HepG2 (cell line): ENCODE measurements at regions of chr10 and their contacts with region 1.

Region 1: GRCh38 chr10:124476043-124476725 is 14.6 kb downstream of the LHPP start:
- DNase-seq: peak; percentile 80
- ATAC-seq: peak; percentile 65
- H3K4me3 ChIP-seq: peak overlapping the region; percentile 42 to 67 (median 54); a peak in 5 of 6 replicates
- H3K27ac ChIP-seq: peak overlapping the region; percentile 57
- H3K4me1 ChIP-seq: peaks cover 79% of the 10 kb centered on the region
- H3K27me3 ChIP-seq: no peaks in the 10 kb centered on the region
- CTCF ChIP-seq: no peak
- EP300 ChIP-seq: no peak
- POLR2A ChIP-seq: peak in 1 of 2 experiments; percentile 54; a peak in 1 of 4 replicates
- RAD21 ChIP-seq: no peak

Region 2: DNA sequence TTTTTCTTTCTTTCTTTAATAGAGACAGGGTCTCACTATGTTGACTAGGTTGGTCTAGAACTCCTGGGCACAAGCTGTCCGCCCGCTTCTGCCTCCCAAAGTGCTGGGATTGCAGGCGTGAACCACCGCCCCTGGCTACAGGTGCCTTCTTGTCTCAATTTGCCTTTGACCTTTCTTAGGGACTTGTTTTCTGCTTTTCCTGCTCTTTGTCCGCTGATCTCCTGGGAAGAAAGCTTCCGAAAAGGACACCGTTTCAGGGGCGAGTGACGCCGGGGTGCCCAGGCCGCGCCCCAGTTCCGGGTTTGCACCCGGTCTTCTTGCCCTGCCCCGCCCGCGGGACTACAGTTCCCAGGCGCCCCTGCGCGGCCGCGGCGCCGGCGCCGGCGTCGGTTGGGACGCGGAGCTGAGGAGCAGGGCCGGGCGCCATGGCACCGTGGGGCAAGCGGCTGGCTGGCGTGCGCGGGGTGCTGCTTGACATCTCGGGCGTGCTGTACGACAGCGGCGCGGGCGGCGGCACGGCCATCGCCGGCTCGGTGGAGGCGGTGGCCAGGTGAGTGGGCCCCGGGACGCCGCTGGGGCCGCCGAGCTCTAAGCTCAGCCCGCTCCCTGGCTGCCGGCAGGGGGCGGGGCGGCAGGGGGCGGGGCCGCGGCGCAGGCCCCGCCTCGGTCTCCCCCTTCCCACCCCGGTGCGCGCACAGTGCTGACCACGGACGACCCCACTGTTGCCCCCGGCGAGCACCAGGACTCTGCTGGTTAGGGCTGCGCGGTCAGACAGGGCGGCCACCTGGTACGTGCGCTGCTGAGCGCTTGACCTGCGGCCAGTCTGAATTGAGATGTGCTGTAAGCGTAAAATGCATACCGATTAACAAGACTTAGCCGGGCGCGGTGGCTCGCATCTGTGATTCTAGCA is 14.5 kb before region 1 on chr10 and contains the start of gene LHPP:
- CTCF ChIA-PET with region 1: no interaction called
- POLR2A ChIA-PET with region 1: interaction called, 10 read pairs
- in situ Hi-C with region 1: no loop called
- intact Hi-C with region 1: no loop called
- DNase-seq: peak; percentile 54
- ATAC-seq: peak; percentile 95
- H3K4me3 ChIP-seq: peak within 1 kb of the TSS; percentile 81 to 97 (median 89)
- H3K27ac ChIP-seq: peak within 1 kb of the TSS; percentile 76
- H3K4me1 ChIP-seq: peaks cover 49% of the 10 kb centered on the region
- H3K27me3 ChIP-seq: no peaks in the 10 kb centered on the region; a peak in 1 of 5 replicates
- CTCF ChIP-seq: peak; percentile 26; the same call in 1 of the 2 replicates
- EP300 ChIP-seq: no peak
- POLR2A ChIP-seq: peak in 1 of 2 experiments; percentile 79; a peak in 2 of 4 replicates
- RAD21 ChIP-seq: peak; percentile 39
- total RNA-seq, gene LHPP: 3.7 and 5.2 TPM in 2 replicates